Activated CD8-positive, alpha-beta memory T cell treated with anti-CD3 and anti-CD28 coated beads, Interleukin-2, amount 10 ng/mL, durations not matched to agents 7 days and 5 days (primary cell): ENCODE measurements at regions of chr14 and their contacts with region 1.

Region 1: DNA sequence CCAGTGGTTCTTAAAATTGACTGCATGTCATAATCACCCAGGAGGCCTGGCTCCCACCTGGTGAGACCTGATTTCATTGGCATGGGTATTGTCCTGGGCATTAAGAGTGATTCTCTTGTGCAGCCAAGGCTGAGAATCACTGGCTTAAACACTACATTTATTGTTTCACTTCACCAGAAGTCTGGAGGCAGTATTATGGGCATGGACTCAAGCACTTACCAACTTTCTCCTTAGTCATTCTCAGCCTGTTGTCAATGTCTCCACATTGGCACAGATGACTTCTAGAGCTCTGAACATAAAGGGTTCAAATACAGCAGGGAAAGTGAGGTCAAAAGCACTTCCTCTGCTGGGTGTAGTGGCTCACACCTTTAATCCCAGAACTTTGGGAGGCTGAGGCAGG is 25.6 kb upstream of the GCH1 start:
- DNase-seq: no peak
- ATAC-seq: peak; percentile 12
- H3K4me3 Mint-ChIP-seq: no peak overlapping the region
- H3K27ac Mint-ChIP-seq: no peak overlapping the region
- H3K4me1 Mint-ChIP-seq: peaks cover 3% of the 10 kb centered on the region
- H3K27me3 Mint-ChIP-seq: no peaks in the 10 kb centered on the region

Region 2: GRCh38 chr14:54916101-54916500 is 12.1 kb before region 1 on chr14:
- CTCF ChIA-PET with region 1: interaction called, 10 read pairs
- DNase-seq: no peak
- ATAC-seq: no peak
- H3K4me3 Mint-ChIP-seq: no peak overlapping the region
- H3K27ac Mint-ChIP-seq: no peak overlapping the region
- H3K4me1 Mint-ChIP-seq: no peaks in the 10 kb centered on the region
- H3K27me3 Mint-ChIP-seq: no peaks in the 10 kb centered on the region

Region 3: GRCh38 chr14:55071870-55072640 is 143.8 kb after region 1 on chr14:
- CTCF ChIA-PET with region 1: no interaction called
- DNase-seq: peak; percentile 52
- ATAC-seq: peak; percentile 70
- H3K4me3 Mint-ChIP-seq: peak overlapping the region; percentile 36
- H3K27ac Mint-ChIP-seq: peak overlapping the region; percentile 77
- H3K4me1 Mint-ChIP-seq: peaks cover 42% of the 10 kb centered on the region
- H3K27me3 Mint-ChIP-seq: no peaks in the 10 kb centered on the region